CD8-positive, alpha-beta memory T cell (primary cell): ENCODE measurements at regions of chr11 and their contacts with region 1.

Region 1: GRCh38 chr11:122673701-122674100 is 18.2 kb downstream of the UBASH3B start:
- DNase-seq: no peak
- H3K4me3 ChIP-seq: no peak overlapping the region
- H3K4me3 Mint-ChIP-seq: no peak overlapping the region
- H3K27ac ChIP-seq: no peak overlapping the region
- H3K27ac Mint-ChIP-seq: peak overlapping the region in 3 of 8 donors; percentile 8 to 42 (median 34)
- H3K4me1 ChIP-seq: peaks cover 71% of the 10 kb centered on the region
- H3K4me1 Mint-ChIP-seq: peaks cover 67 to 84% (median 76%) of the 10 kb centered on the region in 3 donors
- H3K27me3 ChIP-seq: no peaks in the 10 kb centered on the region
- H3K27me3 Mint-ChIP-seq: no peaks in the 10 kb centered on the region

Region 2: DNA sequence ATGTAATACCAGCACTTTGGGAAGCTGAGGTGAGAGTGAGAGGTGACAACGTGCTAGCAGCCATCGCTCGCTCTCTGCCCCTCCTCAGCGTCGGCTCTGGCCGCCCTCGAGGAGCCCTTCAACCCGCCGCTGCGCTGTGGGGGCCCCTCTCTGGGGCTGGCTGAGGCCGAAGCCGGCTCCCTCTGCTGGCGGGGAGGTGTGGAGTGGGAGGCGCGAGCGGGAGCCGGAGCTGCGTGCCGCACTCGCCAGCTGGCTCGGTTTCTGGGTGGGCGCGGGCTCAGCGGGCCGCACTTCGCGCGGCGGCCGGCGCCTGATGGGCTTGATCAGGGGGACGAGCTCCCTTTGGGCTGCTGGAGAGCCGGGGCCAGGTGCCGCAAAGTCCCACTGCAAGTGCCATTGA is 117.1 kb before region 1 on chr11:
- CTCF ChIA-PET with region 1: no interaction called
- POLR2A ChIA-PET with region 1: no interaction called
- DNase-seq: peak in 2 of 5 donors; percentile 6 to 11
- H3K4me3 ChIP-seq: no peak overlapping the region
- H3K4me3 Mint-ChIP-seq: peak overlapping the region in 2 of 7 donors; percentile 8 to 41
- H3K27ac ChIP-seq: no peak overlapping the region
- H3K27ac Mint-ChIP-seq: no peak overlapping the region
- H3K4me1 ChIP-seq: no peaks in the 10 kb centered on the region
- H3K4me1 Mint-ChIP-seq: no peaks in the 10 kb centered on the region
- H3K27me3 ChIP-seq: peaks cover 9% of the 10 kb centered on the region
- H3K27me3 Mint-ChIP-seq: peaks cover 17 to 23% of the 10 kb centered on the region in 2 donors

Region 3: DNA sequence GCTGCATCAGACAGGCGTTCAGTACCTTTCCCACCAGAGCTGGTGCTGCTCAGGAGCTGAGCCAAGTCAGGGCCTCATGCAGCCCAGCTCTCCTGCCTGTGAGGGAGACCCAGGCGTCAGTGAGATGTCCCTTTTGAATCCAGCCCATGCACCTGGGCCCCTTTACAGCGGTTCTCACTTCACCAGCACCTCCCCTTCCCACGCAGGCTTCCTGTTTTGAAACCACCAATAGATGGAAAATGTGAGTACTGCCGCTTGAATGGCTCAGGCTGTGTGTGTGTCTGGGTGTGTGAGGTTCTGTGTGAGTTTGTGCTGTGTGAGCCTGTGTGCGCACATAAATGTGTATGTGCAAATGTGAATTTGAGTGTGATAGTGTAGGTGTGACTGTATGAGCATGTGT is 70.2 kb after region 1 on chr11:
- CTCF ChIA-PET with region 1: interaction called, 13 read pairs
- POLR2A ChIA-PET with region 1: interaction called, 6 read pairs
- DNase-seq: peak; percentile 50 to 88 (median 74)
- H3K4me3 ChIP-seq: peak overlapping the region; percentile 36
- H3K4me3 Mint-ChIP-seq: no peak overlapping the region
- H3K27ac ChIP-seq: peak overlapping the region; percentile 26
- H3K27ac Mint-ChIP-seq: no peak overlapping the region
- H3K4me1 ChIP-seq: peaks cover 70% of the 10 kb centered on the region
- H3K4me1 Mint-ChIP-seq: peaks cover 9 to 24% (median 21%) of the 10 kb centered on the region in 3 donors
- H3K27me3 ChIP-seq: no peaks in the 10 kb centered on the region
- H3K27me3 Mint-ChIP-seq: no peaks in the 10 kb centered on the region